ENCODE measurements at regions of chr5 and their contacts with region 1.

Region 1: DNA sequence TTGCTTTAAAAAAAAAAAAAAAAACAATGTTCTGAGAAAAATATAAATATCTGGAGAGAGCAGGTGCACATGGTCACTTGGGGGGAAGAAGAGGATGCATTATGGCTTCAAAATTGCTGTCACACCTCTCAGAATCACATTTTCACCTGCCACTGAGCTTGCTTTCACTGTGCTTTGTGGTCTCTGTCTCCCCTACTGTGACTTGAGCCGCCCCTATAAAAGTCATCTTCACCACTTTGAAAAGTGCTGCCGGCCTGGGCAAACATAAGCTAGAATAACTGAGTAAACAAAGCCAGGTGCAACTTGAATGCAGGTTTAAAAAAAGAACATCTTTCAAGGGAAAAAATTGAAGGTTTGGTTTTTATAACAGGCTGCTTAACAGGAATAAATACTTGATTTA is 368.1 kb upstream of the GRIA1 start:
- DNase-seq: no peak
- H3K4me3 Mint-ChIP-seq: no peak overlapping the region
- H3K27ac Mint-ChIP-seq: no peak overlapping the region
- H3K4me1 Mint-ChIP-seq: no peaks in the 10 kb centered on the region
- H3K27me3 Mint-ChIP-seq: no peaks in the 10 kb centered on the region
- CTCF ChIP-seq: no peak

Region 2: GRCh38 chr5:152824316-152824715 is 298.1 kb before region 1 on chr5:
- CTCF ChIA-PET with region 1: no interaction called
- POLR2A ChIA-PET with region 1: no interaction called
- intact Hi-C with region 1: no loop called
- DNase-seq: no peak
- H3K4me3 Mint-ChIP-seq: no peak overlapping the region
- H3K27ac Mint-ChIP-seq: no peak overlapping the region
- H3K4me1 Mint-ChIP-seq: no peaks in the 10 kb centered on the region
- H3K27me3 Mint-ChIP-seq: no peaks in the 10 kb centered on the region
- CTCF ChIP-seq: no peak

Region 3: GRCh38 chr5:153005711-153006110 is 116.7 kb before region 1 on chr5:
- CTCF ChIA-PET with region 1: no interaction called
- POLR2A ChIA-PET with region 1: no interaction called
- intact Hi-C with region 1: no loop called
- DNase-seq: no peak
- H3K4me3 Mint-ChIP-seq: no peak overlapping the region
- H3K27ac Mint-ChIP-seq: no peak overlapping the region
- H3K4me1 Mint-ChIP-seq: no peaks in the 10 kb centered on the region
- H3K27me3 Mint-ChIP-seq: no peaks in the 10 kb centered on the region
- CTCF ChIP-seq: no peak

Region 4: GRCh38 chr5:153135411-153135810 is 13.0 kb after region 1 on chr5:
- CTCF ChIA-PET with region 1: interaction called, 10 read pairs
- POLR2A ChIA-PET with region 1: interaction called, 3 read pairs
- intact Hi-C with region 1: no loop called
- DNase-seq: peak; percentile 38
- H3K4me3 Mint-ChIP-seq: no peak overlapping the region
- H3K27ac Mint-ChIP-seq: peak overlapping the region; percentile 46
- H3K4me1 Mint-ChIP-seq: peaks cover 13% of the 10 kb centered on the region
- H3K27me3 Mint-ChIP-seq: no peaks in the 10 kb centered on the region
- CTCF ChIP-seq: no peak

Region 5: DNA sequence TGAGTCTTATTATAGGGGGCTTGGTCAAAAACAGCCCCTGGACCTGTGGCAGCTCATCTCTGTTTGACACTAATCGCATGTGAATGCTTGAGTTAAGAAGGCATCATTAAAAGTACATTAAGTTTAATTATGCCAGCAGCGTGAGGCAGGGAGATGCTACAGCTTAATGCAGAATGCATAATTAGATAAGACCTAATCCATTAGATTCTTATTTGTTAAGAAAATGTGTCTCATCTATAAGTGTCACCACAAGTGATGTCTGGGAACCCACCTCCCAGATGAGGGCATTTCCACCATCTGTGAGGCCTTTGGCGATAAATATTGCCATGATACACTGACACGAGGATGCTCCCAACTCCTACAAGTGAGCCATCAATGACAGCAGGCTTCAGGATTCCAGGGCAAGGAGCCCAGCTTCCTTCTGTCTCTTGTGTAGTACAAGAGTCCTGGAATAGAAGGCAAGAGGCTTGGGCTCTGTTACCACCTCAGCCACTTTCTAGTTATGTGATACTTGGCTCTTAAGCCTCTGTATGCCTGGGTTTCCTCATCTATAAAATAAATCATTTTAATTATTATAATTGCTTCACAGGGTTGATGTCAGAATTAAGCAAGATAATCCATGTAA is 713.6 kb after region 1 on chr5:
- CTCF ChIA-PET with region 1: no interaction called
- POLR2A ChIA-PET with region 1: no interaction called
- intact Hi-C with region 1: no loop called
- DNase-seq: no peak
- H3K4me3 Mint-ChIP-seq: no peak overlapping the region
- H3K27ac Mint-ChIP-seq: no peak overlapping the region
- H3K4me1 Mint-ChIP-seq: no peaks in the 10 kb centered on the region
- H3K27me3 Mint-ChIP-seq: no peaks in the 10 kb centered on the region
- CTCF ChIP-seq: no peak

Measured in MCF 10A (cell line).